HAP-1 (cell line): ENCODE measurements at regions of chr10 and their contacts with region 1.

Region 1: GRCh38 chr10:89553064-89553734 is 17.8 kb upstream of the SLC16A12 start:
- DNase-seq: no peak
- H3K4me3 ChIP-seq: no peak overlapping the region
- H3K4me1 ChIP-seq: no peaks in the 10 kb centered on the region
- H3K27me3 ChIP-seq: no peaks in the 10 kb centered on the region

Region 2: GRCh38 chr10:89241486-89242344 is 311.5 kb before region 1 on chr10:
- in situ Hi-C with region 1: no loop called
- DNase-seq: no peak
- H3K4me3 ChIP-seq: no peak overlapping the region
- H3K4me1 ChIP-seq: 0 out of 2 replicates have a peak, but pooled peaks cover 2% of the 10 kb centered on the region
- H3K27me3 ChIP-seq: no peaks in the 10 kb centered on the region

Region 3: GRCh38 chr10:89431977-89432376 is 121.2 kb before region 1 on chr10:
- in situ Hi-C with region 1: loop called (anchors 10 kb)
- DNase-seq: no peak
- H3K4me3 ChIP-seq: no peak overlapping the region
- H3K4me1 ChIP-seq: peaks cover 8% of the 10 kb centered on the region; the same call in 1 of the 2 replicates
- H3K27me3 ChIP-seq: peaks cover 11% of the 10 kb centered on the region